ENCODE measurements at regions of chr19 and their contacts with region 1.

Region 1: GRCh38 chr19:17282488-17283255 is 971 bp downstream of the ANKLE1 start:
- DNase-seq: peak; percentile 90 to 93
- H3K4me3 ChIP-seq: peak overlapping the region; percentile 62
- H3K4me3 Mint-ChIP-seq: peak overlapping the region; percentile 85
- H3K27ac Mint-ChIP-seq: peak overlapping the region; percentile 79
- H3K4me1 ChIP-seq: peaks cover 11% of the 10 kb centered on the region; the same call in 1 of the 2 replicates
- H3K4me1 Mint-ChIP-seq: peaks cover 5% of the 10 kb centered on the region
- H3K27me3 ChIP-seq: no peaks in the 10 kb centered on the region
- H3K27me3 Mint-ChIP-seq: no peaks in the 10 kb centered on the region
- CTCF ChIP-seq: peak; percentile 88 to 93

Region 2: GRCh38 chr19:17069218-17069617 is 213.5 kb before region 1 on chr19:
- CTCF ChIA-PET with region 1: no interaction called
- POLR2A ChIA-PET with region 1: no interaction called
- intact Hi-C with region 1: loop called (anchors 2 kb)
- DNase-seq: no peak
- H3K4me3 ChIP-seq: no peak overlapping the region
- H3K4me3 Mint-ChIP-seq: no peak overlapping the region
- H3K27ac Mint-ChIP-seq: no peak overlapping the region
- H3K4me1 ChIP-seq: no peaks in the 10 kb centered on the region
- H3K4me1 Mint-ChIP-seq: peaks cover 6% of the 10 kb centered on the region
- H3K27me3 ChIP-seq: no peaks in the 10 kb centered on the region
- H3K27me3 Mint-ChIP-seq: no peaks in the 10 kb centered on the region
- CTCF ChIP-seq: no peak

Region 3: GRCh38 chr19:17205237-17206140 is 77.2 kb before region 1 on chr19:
- CTCF ChIA-PET with region 1: interaction called, 6 read pairs
- POLR2A ChIA-PET with region 1: no interaction called
- intact Hi-C with region 1: loop called (anchors 1 kb)
- DNase-seq: peak; percentile 59 to 73
- H3K4me3 ChIP-seq: no peak overlapping the region
- H3K4me3 Mint-ChIP-seq: no peak overlapping the region
- H3K27ac Mint-ChIP-seq: no peak overlapping the region
- H3K4me1 ChIP-seq: no peaks in the 10 kb centered on the region
- H3K4me1 Mint-ChIP-seq: no peaks in the 10 kb centered on the region
- H3K27me3 ChIP-seq: no peaks in the 10 kb centered on the region
- H3K27me3 Mint-ChIP-seq: no peaks in the 10 kb centered on the region
- CTCF ChIP-seq: peak; percentile 54 to 86

Region 4: GRCh38 chr19:17245244-17245984 is 37.3 kb before region 1 on chr19 and contains the start of gene NR2F6:
- CTCF ChIA-PET with region 1: interaction called, 3 read pairs
- POLR2A ChIA-PET with region 1: interaction called, 3 read pairs
- intact Hi-C with region 1: loop called (anchors 5 kb)
- DNase-seq: peak in 1 of 2 experiments; percentile 61
- H3K4me3 ChIP-seq: peak within 1 kb of the TSS; percentile 78
- H3K4me3 Mint-ChIP-seq: peak within 1 kb of the TSS; percentile 94
- H3K27ac Mint-ChIP-seq: peak within 1 kb of the TSS; percentile 92
- H3K4me1 ChIP-seq: peaks cover 63% of the 10 kb centered on the region
- H3K4me1 Mint-ChIP-seq: peaks cover 30% of the 10 kb centered on the region
- H3K27me3 ChIP-seq: no peaks in the 10 kb centered on the region
- H3K27me3 Mint-ChIP-seq: no peaks in the 10 kb centered on the region
- CTCF ChIP-seq: no peak
- total RNA-seq, gene NR2F6: 94.4 and 96.5 TPM in 2 replicates

Region 5: GRCh38 chr19:17266975-17267788 is 15.5 kb before region 1 on chr19 and contains the start of gene BABAM1:
- CTCF ChIA-PET with region 1: interaction called, 15 read pairs
- POLR2A ChIA-PET with region 1: interaction called, 3 read pairs
- intact Hi-C with region 1: loop called (anchors 2 kb)
- DNase-seq: peak; percentile 97 to 98
- H3K4me3 ChIP-seq: peak within 1 kb of the TSS; percentile 93
- H3K4me3 Mint-ChIP-seq: peak within 1 kb of the TSS; percentile 74
- H3K27ac Mint-ChIP-seq: peak within 1 kb of the TSS; percentile 80
- H3K4me1 ChIP-seq: no peaks in the 10 kb centered on the region; the same call in 1 of the 2 replicates
- H3K4me1 Mint-ChIP-seq: peaks cover 7% of the 10 kb centered on the region
- H3K27me3 ChIP-seq: no peaks in the 10 kb centered on the region
- H3K27me3 Mint-ChIP-seq: no peaks in the 10 kb centered on the region
- CTCF ChIP-seq: no peak
- total RNA-seq, gene BABAM1: 91.7 and 98.8 TPM in 2 replicates

Measured in Caco-2 (cell line).